ENCODE measurements at regions of chr2 and their contacts with region 1.

Region 1: DNA sequence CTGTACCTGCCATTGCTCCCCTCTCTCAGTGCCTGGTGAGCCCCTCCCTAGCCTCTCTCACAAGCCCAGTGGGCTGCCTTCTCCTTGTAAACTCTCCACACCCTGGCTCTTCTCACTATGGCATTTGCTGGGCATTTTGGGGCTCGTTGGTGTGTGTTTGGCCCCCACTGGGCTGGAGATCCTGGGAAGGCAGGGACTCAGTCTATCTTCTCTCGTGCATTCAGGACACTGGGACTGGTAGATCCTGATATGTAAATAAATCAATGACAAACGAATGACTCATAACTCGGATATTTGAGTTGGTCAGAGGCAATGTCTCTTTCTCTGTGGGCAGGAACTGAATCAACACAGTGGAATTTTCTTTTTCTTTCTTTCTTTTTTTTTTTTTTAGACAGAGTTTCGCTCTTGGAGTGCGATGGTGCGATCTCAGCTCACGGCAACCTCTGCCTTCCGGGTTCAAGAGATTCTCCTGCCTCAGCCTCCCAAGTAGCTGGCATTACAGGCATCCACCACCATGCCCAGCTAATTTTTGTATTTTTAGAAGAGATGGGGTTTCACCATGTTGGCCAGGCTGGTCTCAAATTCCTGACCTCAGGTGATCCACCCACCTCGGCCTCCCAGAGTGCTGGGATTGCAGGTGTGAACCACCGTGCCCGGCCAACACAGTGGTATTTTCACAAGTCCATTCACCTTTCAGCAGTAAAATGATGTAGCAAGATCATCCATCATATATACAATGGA is 144.6 kb upstream of the SPRED2 start:
- DNase-seq: no peak
- ATAC-seq: no peak
- H3K4me3 ChIP-seq: no peak overlapping the region
- H3K27ac ChIP-seq: peak overlapping the region in 1 of 10 donors; percentile 16
- H3K4me1 ChIP-seq: peaks cover 0 to 30% (median 12%) of the 10 kb centered on the region in 9 donors
- H3K27me3 ChIP-seq: peaks cover 0 to 4% (median 0%) of the 10 kb centered on the region in 7 donors
- CTCF ChIP-seq: no peak

Region 2: GRCh38 chr2:65056215-65057053 is 520.6 kb before region 1 on chr2 and contains the start of gene CEP68:
- intact Hi-C with region 1: loop called in 3 of 10 experiments (anchors 10 kb)
- DNase-seq: peak; percentile 96 to 98
- ATAC-seq: peak; percentile 94 to 98 (median 98)
- H3K4me3 ChIP-seq: peak within 1 kb of the TSS; percentile 57 to 89 (median 78)
- H3K27ac ChIP-seq: peak within 1 kb of the TSS; percentile 81 to 97 (median 92)
- H3K4me1 ChIP-seq: peaks cover 6 to 65% (median 50%) of the 10 kb centered on the region in 9 donors
- H3K27me3 ChIP-seq: no peaks in the 10 kb centered on the region
- CTCF ChIP-seq: no peak
- total RNA-seq, gene CEP68: 12.5 to 28.4 (median 23.1) TPM

Region 3: DNA sequence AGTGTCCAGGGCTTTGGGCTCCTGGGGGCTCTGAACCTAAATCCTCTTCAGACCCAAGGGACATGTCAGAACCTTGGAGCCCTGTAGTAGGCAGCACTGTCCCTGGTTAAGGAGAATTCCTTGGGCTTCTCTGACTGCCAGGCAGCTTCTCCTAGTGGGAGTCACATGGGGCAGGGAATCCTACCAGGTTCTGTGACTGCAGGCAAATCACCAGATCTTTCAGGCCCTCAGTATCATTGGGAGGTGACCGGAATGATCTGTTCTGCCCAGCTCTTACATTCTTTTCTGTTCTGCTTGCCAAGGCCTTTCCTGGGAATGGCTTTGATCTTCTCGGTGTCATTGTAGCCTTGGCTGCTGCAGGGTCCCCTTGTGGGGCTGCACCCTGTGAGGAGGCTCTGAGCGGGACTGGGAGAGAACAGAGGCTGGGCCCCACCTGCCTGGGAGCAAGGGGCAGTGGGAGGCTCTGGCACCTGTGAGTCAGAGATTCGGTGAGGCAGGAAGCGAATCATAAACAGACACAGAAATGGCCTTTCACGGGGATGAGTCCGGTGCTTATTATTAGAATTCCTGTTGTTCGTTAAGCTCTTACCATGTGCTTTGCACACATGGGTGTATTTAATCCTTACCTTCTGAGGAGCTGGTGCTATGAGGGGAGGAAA is 506.7 kb before region 1 on chr2:
- intact Hi-C with region 1: loop called in 3 of 10 experiments (anchors 10 kb)
- DNase-seq: no peak
- ATAC-seq: peak in 7 of 8 donors; percentile 26 to 53 (median 46)
- H3K4me3 ChIP-seq: no peak overlapping the region
- H3K27ac ChIP-seq: peak overlapping the region in 9 of 10 donors; percentile 22 to 72 (median 60)
- H3K4me1 ChIP-seq: peaks cover 27 to 85% (median 65%) of the 10 kb centered on the region in 9 donors
- H3K27me3 ChIP-seq: no peaks in the 10 kb centered on the region
- CTCF ChIP-seq: peak in 7 of 9 donors; percentile 6 to 45 (median 29)

Region 4: GRCh38 chr2:65264821-65265670 is 312.0 kb before region 1 on chr2:
- intact Hi-C with region 1: loop called in 3 of 10 experiments (anchors 5 kb)
- DNase-seq: peak in 1 of 2 donors; percentile 66
- ATAC-seq: peak in 7 of 8 donors; percentile 72 to 87 (median 82)
- H3K4me3 ChIP-seq: no peak overlapping the region
- H3K27ac ChIP-seq: no peak overlapping the region
- H3K4me1 ChIP-seq: peaks cover 0 to 16% (median 7%) of the 10 kb centered on the region in 9 donors
- H3K27me3 ChIP-seq: no peaks in the 10 kb centered on the region
- CTCF ChIP-seq: peak; percentile 56 to 84 (median 74)

Region 5: DNA sequence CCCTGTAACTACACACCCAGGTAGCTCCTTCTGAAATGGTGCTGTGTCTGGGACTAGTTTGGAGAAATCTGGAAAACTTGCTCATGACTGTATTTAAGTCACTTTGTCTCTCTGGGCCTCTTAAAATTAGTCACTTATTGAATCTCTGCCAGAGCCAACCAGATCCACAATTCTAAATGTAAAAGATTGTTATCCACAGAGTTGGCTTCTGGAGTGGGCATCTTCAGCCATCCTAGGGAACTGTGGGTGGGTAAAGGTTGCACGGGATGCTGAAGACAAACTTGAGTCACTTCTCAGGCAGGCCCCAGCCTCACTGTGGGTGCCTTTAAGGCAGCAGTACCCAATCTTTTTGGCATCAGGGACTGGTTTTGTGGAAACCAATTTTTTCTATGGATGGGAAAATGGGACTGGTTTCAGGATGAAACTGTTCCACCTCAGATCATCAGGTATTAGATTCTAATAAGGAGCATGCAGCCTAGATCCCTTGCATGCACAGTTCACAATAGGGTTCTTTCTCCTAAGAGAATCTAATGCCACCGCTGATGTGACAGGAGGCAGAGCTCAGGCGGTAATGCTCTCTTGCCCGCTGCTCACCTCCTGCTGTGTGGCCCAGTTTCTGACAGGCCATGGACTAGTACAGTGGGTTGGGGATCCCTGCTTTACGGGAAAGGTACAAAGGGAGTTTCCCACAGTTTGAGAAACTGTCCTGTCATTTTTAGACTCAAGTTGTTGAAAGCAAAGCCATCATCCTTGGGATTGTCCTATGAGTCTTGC is 46.3 kb before region 1 on chr2:
- intact Hi-C with region 1: no loop called
- DNase-seq: no peak
- ATAC-seq: no peak
- H3K4me3 ChIP-seq: no peak overlapping the region
- H3K27ac ChIP-seq: no peak overlapping the region
- H3K4me1 ChIP-seq: peaks cover 0 to 3% (median 0%) of the 10 kb centered on the region in 9 donors
- H3K27me3 ChIP-seq: no peaks in the 10 kb centered on the region
- CTCF ChIP-seq: no peak

Region 6: GRCh38 chr2:65554765-65555591 is 22.1 kb before region 1 on chr2:
- intact Hi-C with region 1: no loop called
- DNase-seq: no peak
- ATAC-seq: no peak
- H3K4me3 ChIP-seq: no peak overlapping the region
- H3K27ac ChIP-seq: no peak overlapping the region
- H3K4me1 ChIP-seq: peaks cover 0 to 9% (median 4%) of the 10 kb centered on the region in 9 donors
- H3K27me3 ChIP-seq: no peaks in the 10 kb centered on the region
- CTCF ChIP-seq: no peak

Region 7: GRCh38 chr2:65800998-65801397 is 224.0 kb after region 1 on chr2:
- intact Hi-C with region 1: no loop called
- DNase-seq: no peak
- ATAC-seq: no peak
- H3K4me3 ChIP-seq: no peak overlapping the region
- H3K27ac ChIP-seq: no peak overlapping the region
- H3K4me1 ChIP-seq: peaks cover 0 to 5% (median 0%) of the 10 kb centered on the region in 9 donors
- H3K27me3 ChIP-seq: no peaks in the 10 kb centered on the region
- CTCF ChIP-seq: peak in 6 of 9 donors; percentile 9 to 31 (median 20)

Measured in heart right ventricle (tissue), 16 donors.